Activated CD4-positive, alpha-beta memory T cell treated with anti-CD3 and anti-CD28 coated beads for 36 hours (primary cell): ENCODE measurements at regions of chrX and their contacts with region 1.

Region 1: GRCh38 chrX:137549851-137550664 is 15.9 kb upstream of the ZIC3 start:
- DNase-seq: no peak
- H3K4me3 Mint-ChIP-seq: no peak overlapping the region
- H3K27ac Mint-ChIP-seq: no peak overlapping the region
- H3K4me1 Mint-ChIP-seq: peaks cover 9% of the 10 kb centered on the region
- H3K27me3 Mint-ChIP-seq: peaks cover 33% of the 10 kb centered on the region

Region 2: DNA sequence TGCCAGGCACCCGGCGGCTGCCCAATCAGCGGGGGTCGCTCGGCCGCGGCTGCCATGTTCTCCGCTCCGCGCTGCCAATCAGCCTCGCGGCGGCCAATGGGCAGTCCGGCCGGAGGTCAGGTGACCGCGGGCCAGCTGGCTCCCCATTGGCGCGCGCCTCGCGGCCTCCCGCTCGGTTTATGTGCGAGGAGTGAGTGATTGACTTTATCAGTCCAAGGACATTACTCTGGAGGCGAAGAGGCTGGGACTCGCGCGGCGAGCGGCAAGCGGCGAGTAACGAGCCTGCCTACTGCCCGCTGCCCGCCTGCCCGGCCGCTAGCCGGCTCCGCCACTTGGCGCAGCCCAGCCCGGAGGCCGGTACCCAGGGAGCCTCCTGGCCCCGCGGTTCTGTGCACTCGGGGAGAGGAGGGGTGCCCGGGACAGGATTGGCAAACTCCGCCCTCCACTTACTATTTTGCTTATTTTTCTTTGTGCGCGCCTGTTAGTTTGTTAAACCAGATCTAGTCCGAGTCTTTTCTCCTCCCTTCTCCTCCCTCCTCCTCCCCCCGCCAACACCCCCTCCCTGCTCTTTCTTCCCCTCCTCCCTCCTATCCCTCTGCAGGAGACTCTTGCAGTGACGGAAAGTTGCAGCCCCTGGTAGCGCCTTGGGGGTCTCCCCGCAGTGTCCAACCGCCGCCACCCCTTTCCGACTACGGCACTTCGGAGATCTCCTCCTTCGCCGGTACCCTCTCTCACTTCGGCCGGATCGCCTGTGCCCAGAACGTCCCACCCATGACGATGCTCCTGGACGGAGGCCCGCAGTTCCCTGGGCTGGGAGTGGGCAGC is 16.1 kb after region 1 on chrX and contains the start of gene ZIC3:
- CTCF ChIA-PET with region 1: no interaction called
- POLR2A ChIA-PET with region 1: no interaction called
- intact Hi-C with region 1: loop called (anchors 2 kb)
- DNase-seq: peak; percentile 40
- H3K4me3 Mint-ChIP-seq: peak within 1 kb of the TSS; percentile 54
- H3K27ac Mint-ChIP-seq: peak within 1 kb of the TSS; percentile 21
- H3K4me1 Mint-ChIP-seq: peaks cover 17% of the 10 kb centered on the region
- H3K27me3 Mint-ChIP-seq: peaks cover 38% of the 10 kb centered on the region
- total RNA-seq, gene ZIC3: not detected